ENCODE measurements at regions of chr9 and their contacts with region 1.

Region 1: DNA sequence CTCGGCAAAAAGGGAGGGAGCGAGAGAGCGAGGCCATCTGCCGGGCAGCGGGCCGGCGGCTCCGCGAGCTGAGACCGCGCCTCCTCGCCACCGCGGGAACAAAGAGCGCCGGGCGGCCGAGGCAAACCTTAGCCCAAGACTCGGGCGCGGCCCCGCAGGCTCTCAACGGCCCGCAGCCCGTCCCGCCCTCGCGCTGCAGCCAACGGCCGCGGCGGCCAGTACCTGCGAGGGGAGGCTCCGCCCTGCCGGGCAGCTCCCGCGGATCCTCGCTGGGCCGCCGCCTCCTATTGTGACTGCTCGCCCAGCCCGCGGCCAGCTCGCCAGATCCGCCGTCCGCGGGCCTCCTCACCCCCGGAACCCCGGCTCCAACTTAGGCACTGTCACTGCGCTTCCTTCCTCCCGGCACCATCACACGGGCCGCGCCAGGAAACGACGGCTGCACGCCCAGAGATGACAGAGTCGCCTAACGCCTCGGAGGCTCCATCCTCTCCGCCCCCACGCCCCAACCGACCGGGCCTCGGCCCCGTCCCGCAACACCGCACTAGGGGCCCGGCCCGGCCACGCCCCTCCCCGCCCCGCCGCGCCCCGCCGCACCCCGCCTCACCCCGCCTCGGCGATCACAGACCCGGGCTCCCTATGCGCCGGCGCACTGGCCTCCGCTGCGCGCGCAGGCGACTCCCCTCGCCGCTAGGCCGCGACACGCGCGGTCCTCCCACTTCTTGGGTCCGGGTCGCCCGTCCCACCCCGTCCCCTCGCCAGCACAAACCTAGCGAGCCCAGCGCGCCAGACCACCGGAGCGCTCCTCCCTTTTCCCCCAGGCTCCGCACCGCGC is 479 bp upstream of the RNF38 start:
- DNase-seq: peak; percentile 95
- H3K4me3 Mint-ChIP-seq: peak overlapping the region; percentile 95
- H3K27ac Mint-ChIP-seq: peak overlapping the region; percentile 98
- H3K4me1 Mint-ChIP-seq: peaks cover 36% of the 10 kb centered on the region
- H3K27me3 Mint-ChIP-seq: no peaks in the 10 kb centered on the region

Region 2: GRCh38 chr9:36258208-36258988 is 142.2 kb before region 1 on chr9 and contains the start of gene GNE:
- CTCF ChIA-PET with region 1: no interaction called
- POLR2A ChIA-PET with region 1: no interaction called
- intact Hi-C with region 1: loop called (anchors 1 kb)
- DNase-seq: peak; percentile 98
- H3K4me3 Mint-ChIP-seq: peak within 1 kb of the TSS; percentile 96
- H3K27ac Mint-ChIP-seq: peak within 1 kb of the TSS; percentile 80
- H3K4me1 Mint-ChIP-seq: peaks cover 14% of the 10 kb centered on the region
- H3K27me3 Mint-ChIP-seq: no peaks in the 10 kb centered on the region
- total RNA-seq, gene GNE: 19.2 to 20.5 TPM

Region 3: GRCh38 chr9:36382484-36382883 is 18.1 kb before region 1 on chr9:
- CTCF ChIA-PET with region 1: no interaction called
- POLR2A ChIA-PET with region 1: interaction called, 4 read pairs
- intact Hi-C with region 1: loop called (anchors 2 kb)
- DNase-seq: no peak
- H3K4me3 Mint-ChIP-seq: no peak overlapping the region
- H3K27ac Mint-ChIP-seq: peak overlapping the region; percentile 47
- H3K4me1 Mint-ChIP-seq: peaks cover 69% of the 10 kb centered on the region
- H3K27me3 Mint-ChIP-seq: no peaks in the 10 kb centered on the region

Region 4: GRCh38 chr9:36463467-36463866 is 62.9 kb after region 1 on chr9:
- CTCF ChIA-PET with region 1: no interaction called
- POLR2A ChIA-PET with region 1: no interaction called
- intact Hi-C with region 1: no loop called
- DNase-seq: no peak
- H3K4me3 Mint-ChIP-seq: no peak overlapping the region
- H3K27ac Mint-ChIP-seq: no peak overlapping the region
- H3K4me1 Mint-ChIP-seq: peaks cover 32% of the 10 kb centered on the region
- H3K27me3 Mint-ChIP-seq: no peaks in the 10 kb centered on the region

Region 5: GRCh38 chr9:36487482-36488388 is 87.2 kb after region 1 on chr9:
- CTCF ChIA-PET with region 1: interaction called, 3 read pairs
- POLR2A ChIA-PET with region 1: interaction called, 7 read pairs
- intact Hi-C with region 1: loop called (anchors 1 kb)
- DNase-seq: peak; percentile 93
- H3K4me3 Mint-ChIP-seq: peak overlapping the region; percentile 85
- H3K27ac Mint-ChIP-seq: peak overlapping the region; percentile 97
- H3K4me1 Mint-ChIP-seq: peaks cover 61% of the 10 kb centered on the region
- H3K27me3 Mint-ChIP-seq: no peaks in the 10 kb centered on the region

Region 6: DNA sequence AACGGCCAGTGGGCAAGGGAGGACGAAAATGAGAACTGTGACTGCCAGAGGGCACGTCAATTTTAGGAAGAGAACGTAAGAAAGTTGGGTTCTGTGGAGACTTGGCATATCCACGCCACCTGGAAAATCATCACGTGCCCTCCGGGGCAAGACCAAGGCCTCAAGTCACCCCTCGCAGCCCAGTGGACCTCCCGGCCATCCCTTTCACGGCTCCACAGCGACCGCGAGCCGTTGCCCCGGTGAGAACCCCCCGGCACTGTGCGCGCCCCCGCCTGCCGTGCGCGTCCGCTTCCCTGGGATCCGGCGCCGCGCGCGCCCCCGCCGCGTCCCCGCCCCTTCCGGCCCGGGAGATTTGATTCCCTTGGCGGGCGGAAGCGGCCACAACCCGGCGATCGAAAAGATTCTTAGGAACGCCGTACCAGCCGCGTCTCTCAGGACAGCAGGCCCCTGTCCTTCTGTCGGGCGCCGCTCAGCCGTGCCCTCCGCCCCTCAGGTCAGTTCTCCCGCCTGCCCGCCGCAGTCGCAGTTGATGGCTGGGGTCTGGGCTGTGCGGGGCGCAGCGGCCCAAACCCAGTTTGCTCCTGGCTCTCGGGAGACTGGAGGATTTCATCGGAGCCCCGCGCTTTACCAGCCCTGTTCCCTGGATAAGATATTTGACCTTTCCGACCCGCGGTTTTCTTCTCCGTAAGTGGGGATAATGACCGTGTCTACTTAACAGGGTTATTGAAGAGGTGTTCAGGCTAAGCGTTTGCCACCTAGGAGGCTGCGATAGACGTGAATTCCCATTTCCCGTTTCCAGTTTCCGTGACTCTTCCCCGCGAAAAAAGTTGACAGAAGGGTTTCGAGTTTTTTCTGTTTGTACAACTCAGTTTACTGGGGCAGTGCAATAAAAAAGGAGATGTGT is 172.2 kb after region 1 on chr9 and contains the start of gene MELK:
- CTCF ChIA-PET with region 1: no interaction called
- POLR2A ChIA-PET with region 1: no interaction called
- intact Hi-C with region 1: loop called (anchors 2 kb)
- DNase-seq: peak; percentile 90
- H3K4me3 Mint-ChIP-seq: peak within 1 kb of the TSS; percentile 92
- H3K27ac Mint-ChIP-seq: peak within 1 kb of the TSS; percentile 80
- H3K4me1 Mint-ChIP-seq: peaks cover 30% of the 10 kb centered on the region
- H3K27me3 Mint-ChIP-seq: no peaks in the 10 kb centered on the region
- total RNA-seq, gene MELK: 68.4 to 69.6 TPM

Measured in activated CD4-positive, alpha-beta memory T cell treated with anti-CD3 and anti-CD28 coated beads for 36 hours (primary cell).